MCF 10A (cell line): ENCODE measurements at regions of chr1 and their contacts with region 1.

Region 1: DNA sequence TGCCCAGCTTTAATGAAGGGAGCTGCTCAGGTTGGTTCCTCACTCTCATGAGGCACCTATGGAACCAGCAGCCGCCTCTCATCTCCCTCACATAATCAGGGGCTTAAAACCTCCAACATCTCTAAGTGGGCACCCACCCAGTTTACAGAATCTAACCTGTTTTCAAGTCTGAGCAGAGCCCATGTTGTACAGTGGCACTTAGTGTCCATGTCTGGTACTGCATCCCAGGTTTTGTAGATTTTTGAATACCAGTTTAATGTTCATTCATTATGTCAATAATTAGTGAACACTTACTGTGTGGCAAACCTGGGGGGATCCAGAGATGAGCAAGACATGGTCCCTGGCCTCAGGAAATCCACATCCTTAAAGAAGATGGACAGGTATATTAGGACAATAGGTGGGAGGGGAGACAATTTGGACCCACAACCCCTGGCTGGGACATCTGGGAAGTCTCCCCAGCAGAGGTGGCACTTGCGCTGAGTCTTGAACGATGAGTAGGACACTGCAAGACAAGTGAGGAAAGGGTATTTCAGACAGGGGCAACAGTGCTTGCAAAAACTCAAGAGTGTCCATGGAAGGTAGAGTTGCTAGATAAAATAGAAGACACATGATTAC is 83.3 kb downstream of the LACTBL1 start:
- DNase-seq: peak; percentile 58
- H3K4me3 Mint-ChIP-seq: no peak overlapping the region
- H3K27ac Mint-ChIP-seq: no peak overlapping the region
- H3K4me1 Mint-ChIP-seq: no peaks in the 10 kb centered on the region
- H3K27me3 Mint-ChIP-seq: no peaks in the 10 kb centered on the region
- CTCF ChIP-seq: peak; percentile 84

Region 2: GRCh38 chr1:22861764-22862440 is 27.4 kb before region 1 on chr1:
- CTCF ChIA-PET with region 1: interaction called, 12 read pairs
- POLR2A ChIA-PET with region 1: no interaction called
- intact Hi-C with region 1: no loop called
- DNase-seq: peak; percentile 90
- H3K4me3 Mint-ChIP-seq: no peak overlapping the region
- H3K27ac Mint-ChIP-seq: no peak overlapping the region
- H3K4me1 Mint-ChIP-seq: no peaks in the 10 kb centered on the region
- H3K27me3 Mint-ChIP-seq: no peaks in the 10 kb centered on the region
- CTCF ChIP-seq: peak; percentile 71